A549 (cell line): ENCODE measurements at regions of chr20 and their contacts with region 1.

Region 1: GRCh38 chr20:59403261-59403961 is 103.0 kb downstream of the EDN3 start:
- DNase-seq: peak; percentile 29 to 75
- ATAC-seq: peak; percentile 75 to 93; a peak in 4 of 6 replicates
- H3K4me3 ChIP-seq: peak overlapping the region; percentile 28; the same call in 2 of the 3 replicates
- H3K27ac ChIP-seq: peak overlapping the region; percentile 79 to 80
- H3K4me1 ChIP-seq: peaks cover 27% of the 10 kb centered on the region
- CTCF ChIP-seq: peak; percentile 94
- EP300 ChIP-seq: no peak
- POLR2A ChIP-seq: no peak
- RAD21 ChIP-seq: peak; percentile 92 to 99

Region 2: GRCh38 chr20:58870239-58871014 is 533.0 kb before region 1 on chr20:
- CTCF ChIA-PET with region 1: interaction called, 12 read pairs
- POLR2A ChIA-PET with region 1: no interaction called
- DNase-seq: peak; percentile 63 to 78
- ATAC-seq: peak; percentile 93 to 98
- H3K4me3 ChIP-seq: no peak overlapping the region
- H3K27ac ChIP-seq: no peak overlapping the region
- H3K4me1 ChIP-seq: no peaks in the 10 kb centered on the region
- CTCF ChIP-seq: peak; percentile 85
- EP300 ChIP-seq: no peak
- POLR2A ChIP-seq: no peak
- RAD21 ChIP-seq: peak; percentile 88 to 89

Region 3: GRCh38 chr20:59087829-59088433 is 315.5 kb before region 1 on chr20:
- CTCF ChIA-PET with region 1: interaction called, 37 read pairs
- POLR2A ChIA-PET with region 1: no interaction called
- DNase-seq: peak; percentile 66 to 70
- ATAC-seq: peak; percentile 89 to 97; a peak in 5 of 6 replicates
- H3K4me3 ChIP-seq: no peak overlapping the region
- H3K27ac ChIP-seq: no peak overlapping the region
- H3K4me1 ChIP-seq: no peaks in the 10 kb centered on the region
- CTCF ChIP-seq: peak; percentile 84
- EP300 ChIP-seq: no peak
- POLR2A ChIP-seq: no peak
- RAD21 ChIP-seq: peak; percentile 83 to 88

Region 4: GRCh38 chr20:59102841-59103299 is 300.5 kb before region 1 on chr20:
- CTCF ChIA-PET with region 1: interaction called, 12 read pairs
- POLR2A ChIA-PET with region 1: no interaction called
- DNase-seq: no peak
- ATAC-seq: no peak
- H3K4me3 ChIP-seq: no peak overlapping the region
- H3K27ac ChIP-seq: no peak overlapping the region
- H3K4me1 ChIP-seq: no peaks in the 10 kb centered on the region
- CTCF ChIP-seq: no peak
- EP300 ChIP-seq: no peak
- POLR2A ChIP-seq: no peak
- RAD21 ChIP-seq: no peak

Region 5: GRCh38 chr20:59222253-59223181 is 180.9 kb before region 1 on chr20:
- CTCF ChIA-PET with region 1: interaction called, 33 read pairs
- POLR2A ChIA-PET with region 1: no interaction called
- DNase-seq: peak; percentile 77
- ATAC-seq: peak; percentile 92 to 99
- H3K4me3 ChIP-seq: peak overlapping the region; percentile 51
- H3K27ac ChIP-seq: peak overlapping the region; percentile 81 to 91
- H3K4me1 ChIP-seq: peaks cover 6% of the 10 kb centered on the region; the same call in 2 of the 3 replicates
- CTCF ChIP-seq: peak; percentile 90
- EP300 ChIP-seq: no peak
- POLR2A ChIP-seq: no peak
- RAD21 ChIP-seq: peak; percentile 80 to 92

Region 6: DNA sequence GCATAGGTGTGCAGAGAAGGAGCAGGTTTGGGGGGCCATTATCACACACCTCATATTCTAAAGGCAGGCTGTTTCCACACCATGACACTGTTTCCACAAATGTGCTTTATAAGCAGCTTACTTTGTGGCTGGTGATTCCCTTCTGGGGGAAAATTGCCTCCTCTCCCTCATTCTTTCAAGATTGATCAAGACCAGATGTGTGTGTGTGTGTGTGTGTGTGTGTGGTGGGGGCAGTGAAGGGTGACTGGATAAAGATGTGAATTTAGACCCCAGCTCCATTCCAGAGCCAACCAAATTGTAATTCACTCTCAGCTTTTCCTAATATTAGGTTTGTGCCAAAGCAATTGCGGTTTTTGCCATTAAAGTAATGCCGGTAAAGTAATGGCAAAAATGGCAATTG is 57.4 kb before region 1 on chr20:
- CTCF ChIA-PET with region 1: interaction called, 13 read pairs
- POLR2A ChIA-PET with region 1: no interaction called
- DNase-seq: no peak
- ATAC-seq: no peak
- H3K4me3 ChIP-seq: no peak overlapping the region
- H3K27ac ChIP-seq: no peak overlapping the region; a peak in 1 of 6 replicates
- H3K4me1 ChIP-seq: peaks cover 26% of the 10 kb centered on the region
- CTCF ChIP-seq: no peak
- EP300 ChIP-seq: no peak
- POLR2A ChIP-seq: no peak
- RAD21 ChIP-seq: no peak

Region 7: GRCh38 chr20:59441860-59442845 is 38.7 kb after region 1 on chr20:
- CTCF ChIA-PET with region 1: interaction called, 10 read pairs
- POLR2A ChIA-PET with region 1: no interaction called
- DNase-seq: no peak
- ATAC-seq: no peak
- H3K4me3 ChIP-seq: no peak overlapping the region
- H3K27ac ChIP-seq: no peak overlapping the region
- H3K4me1 ChIP-seq: no peaks in the 10 kb centered on the region
- CTCF ChIP-seq: no peak
- EP300 ChIP-seq: no peak
- POLR2A ChIP-seq: no peak
- RAD21 ChIP-seq: no peak

Region 8: DNA sequence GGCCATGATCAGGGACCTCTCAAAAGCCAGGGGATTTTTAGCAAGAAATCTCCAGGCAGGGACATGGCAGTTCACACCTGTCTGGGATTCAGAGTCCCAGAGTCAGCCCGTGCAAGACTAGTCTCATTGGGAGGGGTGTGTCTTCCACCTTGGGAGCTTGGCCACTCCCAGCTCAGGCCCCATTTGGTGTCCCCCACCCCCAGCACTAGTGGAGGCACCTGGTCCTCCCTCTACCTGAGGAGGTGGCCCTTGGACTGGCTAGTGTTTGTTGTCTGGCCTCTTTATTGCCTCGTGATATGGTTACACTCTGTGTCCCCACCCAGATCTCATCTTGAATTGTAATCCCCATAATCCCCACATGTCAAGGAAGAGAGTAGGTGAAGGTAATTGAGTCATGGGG is 60.1 kb after region 1 on chr20:
- CTCF ChIA-PET with region 1: no interaction called
- POLR2A ChIA-PET with region 1: no interaction called
- DNase-seq: no peak
- ATAC-seq: no peak
- H3K4me3 ChIP-seq: no peak overlapping the region
- H3K27ac ChIP-seq: no peak overlapping the region
- H3K4me1 ChIP-seq: no peaks in the 10 kb centered on the region
- CTCF ChIP-seq: no peak
- EP300 ChIP-seq: no peak
- POLR2A ChIP-seq: no peak
- RAD21 ChIP-seq: no peak